ENCODE measurements at regions of chr15 and their contacts with region 1.

Region 1: GRCh38 chr15:90915808-90916440 is 12.8 kb downstream of the MAN2A2 start:
- DNase-seq: no peak
- H3K4me3 Mint-ChIP-seq: no peak overlapping the region
- H3K27ac Mint-ChIP-seq: no peak overlapping the region
- H3K4me1 Mint-ChIP-seq: no peaks in the 10 kb centered on the region
- H3K27me3 Mint-ChIP-seq: no peaks in the 10 kb centered on the region

Region 2: GRCh38 chr15:90902040-90902839 is 13.7 kb before region 1 on chr15:
- CTCF ChIA-PET with region 1: interaction called, 15 read pairs
- POLR2A ChIA-PET with region 1: no interaction called
- DNase-seq: peak; percentile 77
- H3K4me3 Mint-ChIP-seq: peak overlapping the region; percentile 85
- H3K27ac Mint-ChIP-seq: peak overlapping the region; percentile 94
- H3K4me1 Mint-ChIP-seq: peaks cover 24% of the 10 kb centered on the region
- H3K27me3 Mint-ChIP-seq: no peaks in the 10 kb centered on the region

Region 3: GRCh38 chr15:91393186-91393585 is 477.3 kb after region 1 on chr15:
- CTCF ChIA-PET with region 1: no interaction called
- POLR2A ChIA-PET with region 1: no interaction called
- DNase-seq: no peak
- H3K4me3 Mint-ChIP-seq: no peak overlapping the region
- H3K27ac Mint-ChIP-seq: no peak overlapping the region
- H3K4me1 Mint-ChIP-seq: peaks cover 4% of the 10 kb centered on the region
- H3K27me3 Mint-ChIP-seq: peaks cover 42% of the 10 kb centered on the region